Heart right ventricle (tissue), 16 donors: ENCODE measurements at regions of chr2 and their contacts with region 1.

Region 1: DNA sequence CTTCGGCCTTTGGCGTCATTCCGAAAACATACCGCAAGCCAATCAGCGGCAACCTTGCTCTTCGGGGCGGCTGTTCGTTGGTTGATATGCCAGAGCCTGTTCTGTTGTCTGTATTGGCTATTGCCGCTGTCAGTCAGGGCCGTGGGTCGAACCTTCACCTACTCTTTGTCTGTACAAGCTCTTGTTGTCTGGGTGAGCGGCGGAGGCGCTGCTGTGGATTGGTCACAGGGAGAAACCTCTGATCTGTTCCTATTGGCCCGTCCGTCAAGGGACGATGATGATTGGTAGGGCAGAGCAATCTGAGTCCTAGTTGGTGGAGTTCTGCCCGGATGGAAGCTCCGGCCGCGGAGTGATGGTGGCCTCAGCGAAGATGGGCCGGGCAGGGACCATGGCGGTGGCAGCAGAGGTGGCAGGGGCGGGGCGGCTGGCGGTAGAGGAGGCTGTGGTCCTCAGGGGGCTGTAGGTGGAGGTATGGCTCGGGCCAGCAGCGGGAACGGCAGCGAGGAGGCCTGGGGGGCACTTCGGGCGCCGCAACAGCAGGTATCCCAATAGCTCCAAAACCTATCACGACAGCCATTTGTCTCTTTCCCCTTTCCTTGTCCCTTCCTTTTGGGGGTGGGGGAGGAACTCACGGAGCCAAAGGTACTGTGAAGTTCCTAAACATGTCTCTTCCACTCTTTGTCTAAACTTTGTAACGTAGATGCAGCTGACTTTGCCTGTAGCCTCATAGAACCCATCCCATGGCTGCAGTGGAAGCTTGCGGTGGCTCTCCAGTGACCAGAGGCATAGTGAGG is at the start of gene WBP1:
- DNase-seq: peak; percentile 98 to 100
- ATAC-seq: peak; percentile 92 to 95 (median 94)
- H3K4me3 ChIP-seq: peak within 1 kb of the TSS; percentile 57 to 90 (median 80)
- H3K27ac ChIP-seq: peak within 1 kb of the TSS; percentile 88 to 98 (median 96)
- H3K4me1 ChIP-seq: peaks cover 14 to 42% (median 36%) of the 10 kb centered on the region in 9 donors
- H3K27me3 ChIP-seq: no peaks in the 10 kb centered on the region
- CTCF ChIP-seq: no peak
- total RNA-seq, gene WBP1: 34.8 to 54.1 (median 45.8) TPM

Region 2: GRCh38 chr2:74472086-74472944 is 14.0 kb after region 1 on chr2 and contains the start of gene MRPL53:
- intact Hi-C with region 1: loop called in 2 of 10 experiments (anchors 1 to 2 kb)
- DNase-seq: peak; percentile 96
- ATAC-seq: peak; percentile 91 to 98 (median 97)
- H3K4me3 ChIP-seq: peak within 1 kb of the TSS; percentile 46 to 87 (median 80)
- H3K27ac ChIP-seq: peak within 1 kb of the TSS; percentile 50 to 95 (median 88)
- H3K4me1 ChIP-seq: peaks cover 5 to 36% (median 25%) of the 10 kb centered on the region in 9 donors
- H3K27me3 ChIP-seq: no peaks in the 10 kb centered on the region
- CTCF ChIP-seq: no peak
- total RNA-seq, gene MRPL53: 136 to 188 (median 150) TPM

Region 3: DNA sequence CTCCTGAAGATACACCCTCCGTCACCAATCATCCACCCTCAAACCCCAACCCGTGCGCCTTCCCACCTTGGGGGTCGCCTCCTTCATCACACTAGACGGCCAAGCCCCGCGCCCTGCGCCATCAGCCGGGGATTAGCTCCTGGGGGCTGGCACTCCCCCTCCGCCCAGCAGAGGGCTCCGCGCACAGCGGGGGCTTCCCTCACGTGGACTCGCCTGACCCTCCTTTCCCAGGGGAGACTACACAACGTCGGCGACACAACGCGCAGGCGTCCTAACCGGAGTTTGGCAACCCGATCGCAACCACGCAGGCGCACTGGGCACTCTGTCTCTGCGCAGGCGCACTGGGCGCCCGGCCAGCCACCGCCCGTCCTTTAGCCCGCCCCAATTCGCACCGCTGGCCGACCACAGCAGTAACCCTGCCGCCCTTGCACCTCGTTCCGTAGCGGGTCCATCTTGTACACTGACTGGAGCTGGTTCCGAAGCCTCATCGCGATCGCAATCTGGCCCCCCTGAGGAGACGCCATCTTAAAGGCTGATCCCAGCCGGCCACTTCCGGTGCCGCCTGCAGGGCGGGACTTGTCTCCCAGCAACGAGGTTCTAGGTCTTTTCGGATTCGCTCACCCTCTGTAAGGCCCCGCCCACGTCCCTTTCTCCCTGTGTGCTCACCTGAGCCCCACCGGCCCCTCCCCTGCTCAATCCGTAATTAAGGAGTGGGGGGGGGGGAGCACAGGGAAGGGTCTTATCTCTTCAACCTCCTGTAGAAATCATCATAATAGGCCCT is 49.0 kb after region 1 on chr2 and contains the start of gene PCGF1:
- intact Hi-C with region 1: loop called in 1 of 10 experiments (anchors 1 kb)
- DNase-seq: peak; percentile 99
- ATAC-seq: peak; percentile 95 to 97 (median 96)
- H3K4me3 ChIP-seq: peak within 1 kb of the TSS; percentile 64 to 83 (median 70)
- H3K27ac ChIP-seq: peak within 1 kb of the TSS; percentile 95 to 99 (median 96)
- H3K4me1 ChIP-seq: peaks cover 8 to 55% (median 43%) of the 10 kb centered on the region in 9 donors
- H3K27me3 ChIP-seq: peaks cover 0 to 56% (median 43%) of the 10 kb centered on the region in 7 donors
- CTCF ChIP-seq: peak in 8 of 9 donors; percentile 40 to 67 (median 49)
- total RNA-seq, gene PCGF1: 10.7 to 27.4 (median 14.9) TPM

Region 4: GRCh38 chr2:74525717-74526648 is 67.7 kb after region 1 on chr2 and contains the start of gene DQX1:
- intact Hi-C with region 1: no loop called
- DNase-seq: no peak
- ATAC-seq: no peak
- H3K4me3 ChIP-seq: no peak within 1 kb of the TSS
- H3K27ac ChIP-seq: no peak within 1 kb of the TSS
- H3K4me1 ChIP-seq: peaks cover 6 to 25% (median 20%) of the 10 kb centered on the region in 9 donors
- H3K27me3 ChIP-seq: peaks cover 0 to 8% (median under 1%) of the 10 kb centered on the region in 7 donors
- CTCF ChIP-seq: no peak
- total RNA-seq, gene DQX1: 0.65 TPM in 1 of 10 donors, not detected in the others

Region 5: DNA sequence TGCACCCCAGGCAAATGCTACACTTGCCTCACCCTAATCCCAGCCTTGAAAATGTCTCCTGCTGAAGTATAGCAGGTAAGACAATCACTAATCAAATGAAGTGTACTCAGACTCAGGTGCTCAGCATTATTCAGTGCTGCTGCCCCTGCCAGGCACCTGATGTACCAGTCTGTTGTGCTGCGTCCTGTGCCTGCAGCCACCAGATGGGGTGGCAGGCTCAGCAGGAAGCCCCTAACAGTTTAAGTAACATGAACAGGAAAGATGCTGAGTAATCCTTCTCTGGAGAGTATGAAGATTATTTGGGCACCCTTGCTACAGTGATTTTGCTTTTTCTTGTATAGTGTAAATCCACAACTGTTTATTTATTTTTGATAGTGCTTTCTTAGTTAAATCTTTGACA is 671.8 kb after region 1 on chr2:
- intact Hi-C with region 1: no loop called
- DNase-seq: no peak
- ATAC-seq: no peak
- H3K4me3 ChIP-seq: no peak overlapping the region
- H3K27ac ChIP-seq: no peak overlapping the region
- H3K4me1 ChIP-seq: peaks cover 0 to 7% (median 0%) of the 10 kb centered on the region in 9 donors
- H3K27me3 ChIP-seq: no peaks in the 10 kb centered on the region
- CTCF ChIP-seq: peak in 2 of 9 donors; percentile 9 to 18